SK-N-SH (cell line): ENCODE measurements at regions of chr4 and their contacts with region 1.

Region 1: DNA sequence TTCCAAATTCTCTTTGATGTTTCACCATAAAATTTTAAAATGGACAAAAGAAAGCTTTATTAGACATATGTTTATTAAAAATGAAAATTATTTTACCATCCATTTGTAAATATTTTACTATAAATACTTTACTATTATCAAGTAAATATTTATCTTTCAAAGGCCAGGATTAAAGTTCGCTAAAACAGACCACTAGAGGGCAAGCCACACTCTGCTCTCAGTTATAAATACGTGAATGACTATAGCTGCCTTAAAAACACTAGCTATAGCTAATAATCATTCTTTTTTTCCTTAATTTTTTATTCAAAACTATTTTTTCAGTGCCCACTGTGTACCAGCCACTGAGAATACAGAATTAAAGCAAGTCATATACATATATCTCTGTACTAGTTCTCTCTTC is 38.6 kb downstream of the UNC5C start:
- DNase-seq: no peak
- H3K4me3 ChIP-seq: no peak overlapping the region
- H3K27ac ChIP-seq: peak overlapping the region; percentile 18 to 96; a peak in 3 of 4 replicates
- H3K4me1 ChIP-seq: peaks cover 13 to 54% of the 10 kb centered on the region in 2 experiments; a peak in 3 of 4 replicates
- H3K27me3 ChIP-seq: no peaks in the 10 kb centered on the region
- CTCF ChIP-seq: peak; percentile 74
- EP300 ChIP-seq: no peak
- RAD21 ChIP-seq: peak; percentile 80

Region 2: DNA sequence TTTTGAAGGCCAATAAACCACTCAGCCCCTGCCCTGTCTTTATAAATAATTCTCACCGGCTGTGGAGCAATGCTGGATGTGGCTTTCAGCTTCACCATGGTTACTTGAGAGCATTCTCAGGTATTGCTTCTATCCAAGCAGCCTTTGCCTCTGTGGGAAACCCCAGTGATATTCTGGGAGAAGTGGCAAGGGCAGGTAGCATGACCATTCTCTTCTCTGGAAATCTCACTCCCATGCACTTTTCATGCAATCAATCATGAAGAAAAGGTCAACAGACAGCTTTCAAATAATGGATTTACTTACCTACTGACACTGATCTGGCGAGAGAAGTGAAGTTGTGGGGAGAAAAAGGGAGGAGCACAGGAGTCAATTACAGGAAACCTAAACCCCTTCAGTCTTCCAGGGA is 10.9 kb before region 1 on chr4:
- CTCF ChIA-PET with region 1: interaction called, 20 read pairs
- POLR2A ChIA-PET with region 1: no interaction called
- DNase-seq: no peak
- H3K4me3 ChIP-seq: no peak overlapping the region
- H3K27ac ChIP-seq: peak overlapping the region in 1 of 2 experiments; percentile 22; a peak in 1 of 4 replicates
- H3K4me1 ChIP-seq: peaks cover 0 to 6% of the 10 kb centered on the region in 2 experiments; a peak in 2 of 4 replicates
- H3K27me3 ChIP-seq: no peaks in the 10 kb centered on the region
- CTCF ChIP-seq: no peak
- EP300 ChIP-seq: no peak
- RAD21 ChIP-seq: no peak

Region 3: DNA sequence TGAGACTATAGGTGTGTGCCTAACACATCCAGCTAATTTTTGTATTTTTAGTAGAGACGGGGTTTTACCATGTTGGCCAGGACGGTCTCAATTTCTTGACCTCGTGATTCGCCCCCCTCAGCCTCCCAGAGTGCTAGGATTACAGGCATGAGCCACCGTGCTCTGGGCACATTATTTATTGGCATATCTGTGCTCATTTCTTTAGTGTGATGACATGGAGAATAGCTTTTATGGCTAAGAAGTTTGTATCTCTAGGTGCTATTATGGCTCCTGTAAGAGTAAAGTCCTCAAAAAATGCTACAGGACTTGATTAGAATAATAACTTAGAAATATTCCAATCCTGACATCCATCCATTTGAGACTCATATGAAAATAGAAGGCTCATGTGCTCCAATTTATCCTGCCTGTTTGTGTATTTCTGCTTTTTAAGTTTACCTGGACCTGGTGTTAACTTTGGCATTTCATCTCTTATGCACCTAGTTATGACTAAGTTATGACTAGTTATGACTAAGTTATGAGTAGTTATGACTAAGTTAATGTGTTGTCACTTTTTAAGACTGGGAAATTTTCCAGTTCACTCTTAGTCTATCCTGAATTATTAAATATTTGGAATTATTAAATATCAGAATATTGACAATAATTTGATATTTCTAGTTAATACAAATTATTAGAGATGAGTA is 75.0 kb after region 1 on chr4:
- CTCF ChIA-PET with region 1: no interaction called
- POLR2A ChIA-PET with region 1: no interaction called
- DNase-seq: no peak
- H3K4me3 ChIP-seq: no peak overlapping the region
- H3K27ac ChIP-seq: no peak overlapping the region
- H3K4me1 ChIP-seq: no peaks in the 10 kb centered on the region; a peak in 1 of 4 replicates
- H3K27me3 ChIP-seq: no peaks in the 10 kb centered on the region
- CTCF ChIP-seq: no peak
- EP300 ChIP-seq: no peak
- RAD21 ChIP-seq: no peak